ENCODE measurements at regions of chr12 and their contacts with region 1.

Region 1: DNA sequence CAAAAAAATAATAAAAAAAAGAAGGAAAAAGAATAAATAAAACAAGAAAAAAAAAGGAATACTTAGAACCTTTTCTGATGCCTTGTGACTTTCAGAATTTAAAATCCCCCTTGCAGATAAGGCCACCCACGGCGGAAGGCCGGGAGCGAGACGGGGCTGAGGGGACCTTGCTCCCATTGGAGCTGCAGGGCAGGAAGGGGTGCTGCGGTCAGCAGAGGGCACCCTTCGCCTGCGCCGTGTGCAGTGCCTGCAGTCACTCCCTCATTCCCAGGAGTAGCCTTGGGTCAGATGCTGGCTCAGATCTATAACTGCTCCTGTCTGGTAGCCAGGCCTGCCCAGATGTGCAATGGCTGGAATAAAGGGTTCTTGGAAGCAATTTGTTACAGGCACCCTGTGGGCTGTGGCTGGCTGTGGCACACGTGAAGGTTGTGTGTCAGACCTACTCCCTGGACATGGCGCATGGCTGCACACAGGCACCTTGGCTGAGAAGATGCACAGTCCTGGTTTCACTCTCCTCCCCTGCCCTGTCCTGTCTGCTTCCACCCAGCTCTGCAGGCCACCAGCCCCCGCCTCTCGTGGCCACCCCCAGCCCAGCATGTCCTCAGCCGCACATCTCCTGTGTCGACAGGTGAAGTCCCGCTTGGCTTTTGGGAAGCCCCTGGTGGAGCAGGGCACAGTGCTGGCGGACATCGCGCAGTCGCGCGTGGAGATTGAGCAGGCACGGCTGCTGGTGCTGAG is 13.4 kb upstream of the ALDH2 start:
- DNase-seq: peak; percentile 77 to 89 (median 88)
- ATAC-seq: peak; percentile 83 to 84
- H3K4me3 ChIP-seq: no peak overlapping the region
- H3K27ac ChIP-seq: no peak overlapping the region
- H3K4me1 ChIP-seq: peaks cover 21% of the 10 kb centered on the region
- H3K27me3 ChIP-seq: no peaks in the 10 kb centered on the region

Region 2: GRCh38 chr12:111792155-111792855 is 39.0 kb after region 1 on chr12:
- intact Hi-C with region 1: loop called in 2 of 4 experiments (anchors 5 kb)
- DNase-seq: peak; percentile 88 to 90 (median 89)
- ATAC-seq: peak; percentile 88 to 94
- H3K4me3 ChIP-seq: no peak overlapping the region
- H3K27ac ChIP-seq: peak overlapping the region; percentile 67
- H3K4me1 ChIP-seq: peaks cover 2% of the 10 kb centered on the region
- H3K27me3 ChIP-seq: no peaks in the 10 kb centered on the region

Region 3: DNA sequence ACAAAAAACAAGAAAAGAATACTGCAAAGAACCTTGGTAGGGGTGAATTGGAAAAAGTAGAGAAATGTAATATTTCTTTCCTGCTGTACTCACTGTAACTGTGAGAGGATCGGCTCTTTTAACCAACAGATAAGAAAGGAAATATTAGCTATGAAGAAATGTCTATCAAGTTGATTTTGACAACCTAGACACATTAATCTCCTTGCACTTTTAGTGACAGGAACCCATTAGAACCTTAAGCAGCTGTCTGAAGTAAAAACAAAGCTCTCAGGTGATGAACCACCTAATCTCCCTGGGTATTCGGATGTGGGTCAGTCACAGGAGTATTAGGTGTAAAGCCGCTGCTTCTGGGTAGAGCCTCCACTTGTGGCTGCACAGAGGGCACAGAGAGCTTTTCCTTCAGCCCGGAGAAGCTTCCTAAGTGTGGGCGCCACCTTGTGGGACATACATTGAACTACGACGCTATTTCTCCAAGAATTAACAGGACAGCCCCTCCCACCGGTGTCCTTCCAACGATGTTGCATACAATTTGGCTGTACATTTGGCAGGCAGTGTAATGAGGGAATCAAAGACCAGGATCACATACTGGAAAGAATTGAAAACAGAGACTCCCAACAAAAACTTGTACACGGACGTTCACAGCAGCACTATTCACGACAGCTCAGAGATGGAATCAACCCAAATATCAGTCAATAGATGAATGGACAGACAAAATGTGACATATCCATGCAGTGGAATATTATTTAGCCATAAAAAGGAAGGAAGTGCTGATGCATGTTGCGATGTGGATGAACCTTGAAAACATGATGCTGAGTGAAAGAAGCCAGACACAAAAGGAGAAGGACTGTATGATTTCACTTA is 59.8 kb after region 1 on chr12:
- intact Hi-C with region 1: loop called (anchors 2 to 5 kb)
- DNase-seq: peak; percentile 79 to 89 (median 80)
- ATAC-seq: peak; percentile 91 to 97
- H3K4me3 ChIP-seq: no peak overlapping the region
- H3K27ac ChIP-seq: no peak overlapping the region
- H3K4me1 ChIP-seq: no peaks in the 10 kb centered on the region
- H3K27me3 ChIP-seq: no peaks in the 10 kb centered on the region